Stomach (tissue), 19 donors: ENCODE measurements at regions of chr21 and their contacts with region 1.

Region 1: GRCh38 chr21:41816220-41817165 is 49.6 kb upstream of the RIPK4 start:
- DNase-seq: peak; percentile 74 to 87
- H3K4me3 ChIP-seq: no peak overlapping the region
- H3K27ac ChIP-seq: no peak overlapping the region
- H3K4me1 ChIP-seq: peaks cover 4 to 9% (median 7%) of the 10 kb centered on the region in 4 donors
- H3K27me3 ChIP-seq: no peaks in the 10 kb centered on the region
- CTCF ChIP-seq: peak in 5 of 7 experiments; percentile 63 to 80 (median 71)
- EP300 ChIP-seq: no peak
- POLR2A ChIP-seq: no peak

Region 2: DNA sequence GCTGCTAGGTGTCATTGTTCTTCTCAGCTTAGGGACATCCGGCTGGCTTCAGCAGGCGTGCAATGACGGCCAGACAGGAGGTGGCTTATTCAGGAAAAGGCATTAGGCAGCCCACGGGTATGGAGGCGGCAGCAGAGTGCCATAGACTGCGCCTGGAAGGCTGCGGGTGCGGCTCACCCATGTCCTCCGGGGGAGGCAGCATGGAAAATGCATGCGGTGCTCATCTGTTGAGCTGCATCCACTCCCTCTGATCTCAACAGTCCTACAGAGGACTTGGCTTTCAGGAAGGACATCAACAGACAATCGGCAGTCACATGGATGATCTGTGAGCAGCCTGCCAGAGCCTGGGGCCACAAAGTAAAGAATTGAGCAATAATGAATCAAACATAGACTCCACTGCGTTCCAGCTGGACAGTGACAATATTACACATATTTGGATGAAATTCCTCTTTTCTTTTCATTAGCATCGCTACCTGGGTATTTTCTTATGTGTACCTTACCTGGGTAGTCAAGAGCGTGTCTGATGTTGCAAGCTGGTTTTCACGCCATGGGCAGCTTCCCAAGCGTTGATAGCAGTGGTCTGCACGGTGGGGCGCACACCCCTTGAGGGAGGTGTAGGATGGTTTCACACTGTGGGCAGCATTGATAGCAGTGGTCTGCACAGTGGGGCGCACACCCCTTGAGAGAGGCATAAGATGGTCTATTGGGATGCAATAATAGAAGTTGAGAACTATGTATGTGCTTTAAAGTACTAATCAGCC is 297.6 kb after region 1 on chr21:
- intact Hi-C with region 1: loop called (anchors 5 kb)
- DNase-seq: no peak
- H3K4me3 ChIP-seq: no peak overlapping the region
- H3K27ac ChIP-seq: no peak overlapping the region
- H3K4me1 ChIP-seq: peaks cover 3 to 10% (median 6%) of the 10 kb centered on the region in 4 donors
- H3K27me3 ChIP-seq: peaks cover 0 to 53% (median 13%) of the 10 kb centered on the region in 3 donors
- CTCF ChIP-seq: no peak
- EP300 ChIP-seq: no peak
- POLR2A ChIP-seq: no peak